ENCODE measurements at regions of chr11 and their contacts with region 1.

Region 1: GRCh38 chr11:68843703-68844312 is 2.1 kb upstream of the CPT1A start:
- DNase-seq: no peak
- H3K4me3 ChIP-seq: peak overlapping the region; percentile 50
- H3K27ac ChIP-seq: no peak overlapping the region
- H3K27me3 ChIP-seq: peaks cover 12% of the 10 kb centered on the region
- CTCF ChIP-seq: 0 out of 2 replicates have a peak, but pooled peaks have one; percentile 16

Region 2: GRCh38 chr11:67177399-67178281 is 1666.2 kb before region 1 on chr11:
- CTCF ChIA-PET with region 1: interaction called, 12 read pairs
- POLR2A ChIA-PET with region 1: no interaction called
- DNase-seq: no peak
- H3K4me3 ChIP-seq: no peak overlapping the region
- H3K27ac ChIP-seq: peak overlapping the region; percentile 11
- H3K27me3 ChIP-seq: no peaks in the 10 kb centered on the region
- CTCF ChIP-seq: no peak

Region 3: DNA sequence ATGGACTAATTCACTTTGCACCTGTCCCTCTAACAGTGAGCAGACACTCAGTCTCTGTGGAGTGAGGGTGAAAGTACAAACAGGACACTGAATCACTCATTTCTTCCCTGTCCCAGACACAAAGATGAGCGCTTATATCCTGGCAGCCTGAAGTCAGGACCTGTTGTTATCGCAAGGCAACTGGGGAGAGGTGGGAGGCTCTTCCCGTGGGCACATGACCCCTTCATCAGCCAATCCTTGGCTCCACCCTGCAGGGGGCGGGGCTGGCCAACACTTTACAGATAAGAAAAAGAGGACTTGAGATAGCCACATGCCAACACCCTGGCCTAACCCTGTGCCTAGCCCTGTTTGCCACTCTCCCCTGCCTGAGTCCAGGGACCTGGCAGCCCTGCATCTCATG is 63.0 kb before region 1 on chr11:
- CTCF ChIA-PET with region 1: no interaction called
- POLR2A ChIA-PET with region 1: no interaction called
- DNase-seq: no peak
- H3K4me3 ChIP-seq: no peak overlapping the region
- H3K27ac ChIP-seq: no peak overlapping the region
- H3K27me3 ChIP-seq: no peaks in the 10 kb centered on the region
- CTCF ChIP-seq: no peak